ENCODE measurements at regions of chr1 and their contacts with region 1.

Region 1: DNA sequence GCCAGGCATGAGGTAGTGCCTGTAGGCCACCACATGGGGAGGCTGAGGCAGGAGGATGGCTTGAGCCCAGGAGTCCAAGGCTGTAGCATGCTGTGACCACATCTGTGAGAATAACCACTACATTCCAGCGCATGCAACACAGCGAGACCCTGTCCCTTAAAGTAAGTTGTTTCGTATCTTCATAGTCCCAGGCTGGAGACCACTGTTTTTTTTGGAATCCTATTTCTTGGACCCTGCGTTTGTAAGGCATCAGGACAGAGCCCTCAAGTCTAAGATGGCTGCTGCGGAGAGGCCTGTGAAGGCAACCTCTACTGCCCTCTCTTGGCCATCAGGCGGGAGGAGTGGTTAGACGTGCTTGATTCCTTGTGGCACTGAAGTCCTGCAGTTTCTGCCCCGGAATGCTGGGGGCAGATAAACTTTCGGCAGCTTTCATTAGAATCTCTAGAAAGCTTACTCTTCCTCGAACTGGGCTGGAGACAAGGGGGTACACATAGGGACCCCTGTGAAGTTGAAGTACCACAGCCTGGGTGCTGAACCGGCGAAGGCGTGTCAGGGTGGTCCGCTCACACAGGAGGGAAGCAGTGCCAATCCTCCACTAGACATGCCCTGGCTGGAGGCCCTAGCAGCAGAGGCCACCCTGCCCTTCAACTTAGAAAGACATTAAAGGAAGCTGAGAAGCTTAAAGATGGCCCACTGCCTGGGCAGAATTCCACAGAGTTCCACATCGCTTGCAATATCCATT is 36.6 kb downstream of the RABIF start:
- DNase-seq: peak; percentile 85
- H3K4me3 Mint-ChIP-seq: no peak overlapping the region
- H3K27ac Mint-ChIP-seq: no peak overlapping the region
- H3K4me1 Mint-ChIP-seq: peaks cover 20% of the 10 kb centered on the region
- H3K27me3 Mint-ChIP-seq: no peaks in the 10 kb centered on the region

Region 2: DNA sequence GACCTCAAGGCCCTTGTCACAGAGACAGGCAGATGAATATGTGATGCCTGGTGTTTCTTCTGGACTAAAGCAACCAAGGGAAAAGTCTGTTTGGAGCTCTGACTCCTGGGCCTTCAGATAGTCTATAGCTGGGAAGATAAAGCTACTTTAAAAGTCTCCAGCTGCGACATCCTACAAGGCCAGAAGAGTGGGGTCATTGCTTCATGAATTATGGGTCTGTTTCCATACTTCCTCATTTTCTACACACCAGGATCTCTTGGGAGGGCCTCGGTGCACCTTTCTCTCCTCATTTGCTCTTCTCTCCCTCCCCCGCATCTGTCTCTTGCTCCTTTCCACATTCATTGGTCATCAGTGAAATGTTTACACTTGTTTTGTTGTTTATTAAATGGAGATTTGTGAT is 186.9 kb before region 1 on chr1:
- intact Hi-C with region 1: loop called (anchors 5 kb)
- DNase-seq: no peak
- H3K4me3 Mint-ChIP-seq: no peak overlapping the region
- H3K27ac Mint-ChIP-seq: no peak overlapping the region
- H3K4me1 Mint-ChIP-seq: no peaks in the 10 kb centered on the region
- H3K27me3 Mint-ChIP-seq: peaks cover 25% of the 10 kb centered on the region

Region 3: DNA sequence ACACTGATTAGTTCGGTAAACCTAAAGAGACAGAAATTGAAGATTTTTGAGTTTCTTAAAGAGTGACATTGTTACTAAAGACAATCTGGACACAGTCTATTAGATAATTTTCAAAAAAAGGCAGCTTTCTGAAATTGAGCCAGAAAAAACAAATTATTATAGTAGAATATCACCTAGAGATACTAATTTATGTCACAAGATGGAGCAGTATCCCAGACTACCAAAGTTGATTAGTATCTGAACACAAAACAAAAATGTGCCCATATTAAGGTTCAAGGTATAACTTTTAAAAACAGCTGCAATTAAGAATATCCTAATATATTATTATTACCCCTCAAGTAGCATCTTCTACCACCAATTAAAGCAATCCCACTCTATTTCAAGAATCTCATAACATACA is 101.6 kb before region 1 on chr1:
- intact Hi-C with region 1: loop called (anchors 2 kb)
- DNase-seq: no peak
- H3K4me3 Mint-ChIP-seq: no peak overlapping the region
- H3K27ac Mint-ChIP-seq: no peak overlapping the region
- H3K4me1 Mint-ChIP-seq: no peaks in the 10 kb centered on the region
- H3K27me3 Mint-ChIP-seq: no peaks in the 10 kb centered on the region